A673 (cell line): ENCODE measurements at regions of chr19 and their contacts with region 1.

Region 1: DNA sequence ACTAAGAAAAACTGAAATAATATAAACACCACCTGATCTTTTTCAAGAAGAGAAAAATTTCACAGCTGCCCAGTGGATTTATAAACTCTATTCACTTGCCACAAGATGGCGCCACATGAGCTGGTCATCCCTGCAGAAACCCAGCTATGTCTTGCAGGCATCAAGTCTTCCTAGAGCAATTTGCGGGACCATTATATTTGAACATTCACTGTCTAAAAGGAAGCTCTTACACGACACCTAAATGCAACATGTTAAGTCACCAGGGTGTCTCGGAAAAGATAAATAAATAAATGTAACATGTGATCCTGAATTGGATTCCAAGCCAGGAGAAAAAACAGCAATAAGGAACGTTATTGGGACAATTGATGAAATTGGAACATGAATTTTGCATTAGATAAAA is 20.3 kb upstream of the AKT2 start:
- DNase-seq: peak; percentile 93
- H3K4me3 ChIP-seq: no peak overlapping the region
- H3K27ac ChIP-seq: peak overlapping the region; percentile 86
- H3K4me1 ChIP-seq: peaks cover 35% of the 10 kb centered on the region
- H3K27me3 ChIP-seq: no peaks in the 10 kb centered on the region
- CTCF ChIP-seq: peak; percentile 84

Region 2: DNA sequence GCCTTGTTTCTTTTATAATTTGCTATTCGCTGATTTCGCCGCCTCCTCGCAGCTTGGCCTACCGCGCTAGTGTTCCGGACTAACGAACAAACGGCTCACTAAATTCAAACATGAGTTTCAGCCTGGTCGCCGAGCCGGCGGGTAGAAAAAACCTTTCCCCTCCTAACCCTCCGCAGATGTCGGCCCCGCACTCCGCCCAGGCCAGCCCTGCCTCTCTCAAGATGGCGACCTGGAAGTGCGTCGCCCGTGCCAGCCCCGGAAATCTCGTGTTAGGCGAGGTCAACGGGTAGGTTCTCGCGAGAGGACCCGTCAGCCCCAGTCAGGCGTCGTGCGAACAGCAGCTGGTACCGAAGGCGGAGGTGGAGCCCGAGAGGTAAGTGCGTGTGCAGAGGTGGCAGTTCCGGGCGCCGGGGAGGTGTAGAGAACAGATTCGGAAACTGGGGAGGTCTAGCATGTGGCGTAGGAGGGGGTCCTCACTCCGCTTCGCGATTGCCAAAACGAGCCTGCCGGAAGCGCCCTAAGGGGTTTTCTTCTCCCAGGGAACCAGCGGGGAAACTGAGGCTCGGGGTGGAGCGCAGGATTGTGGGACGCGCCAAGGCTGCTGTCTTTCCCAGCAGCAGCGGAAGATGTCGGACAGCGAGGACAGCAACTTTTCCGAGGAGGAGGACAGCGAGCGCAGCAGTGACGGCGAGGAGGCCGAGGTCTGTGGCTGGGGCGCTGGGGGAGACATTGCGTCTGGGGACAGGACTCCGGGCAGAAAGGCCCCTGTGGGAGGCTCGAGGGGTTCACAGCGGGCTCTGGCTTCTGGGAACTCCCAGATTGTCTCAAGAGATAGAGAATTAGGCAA is 859.9 kb before region 1 on chr19 and contains the start of gene SUPT5H:
- CTCF ChIA-PET with region 1: no interaction called
- POLR2A ChIA-PET with region 1: no interaction called
- intact Hi-C with region 1: no loop called
- DNase-seq: peak; percentile 98
- H3K4me3 ChIP-seq: peak within 1 kb of the TSS; percentile 98
- H3K27ac ChIP-seq: peak within 1 kb of the TSS; percentile 88
- H3K4me1 ChIP-seq: peaks cover 10% of the 10 kb centered on the region
- H3K27me3 ChIP-seq: no peaks in the 10 kb centered on the region
- CTCF ChIP-seq: no peak
- total RNA-seq, gene SUPT5H: 160 and 169 TPM in 2 replicates

Region 3: GRCh38 chr19:40348125-40348913 is 42.9 kb after region 1 on chr19 and contains the starts of genes C19orf47 and PLD3:
- CTCF ChIA-PET with region 1: interaction called, 15 read pairs
- POLR2A ChIA-PET with region 1: no interaction called
- intact Hi-C with region 1: no loop called
- DNase-seq: peak; percentile 100
- H3K4me3 ChIP-seq: peak within 1 kb of the TSS; percentile 86
- H3K27ac ChIP-seq: peak within 1 kb of the TSS; percentile 66
- H3K4me1 ChIP-seq: peaks cover 10% of the 10 kb centered on the region
- H3K27me3 ChIP-seq: no peaks in the 10 kb centered on the region
- CTCF ChIP-seq: no peak
- total RNA-seq, gene C19orf47: 26.5 and 30.8 TPM in 2 replicates
- total RNA-seq, gene PLD3: 310 and 334 TPM in 2 replicates

Region 4: DNA sequence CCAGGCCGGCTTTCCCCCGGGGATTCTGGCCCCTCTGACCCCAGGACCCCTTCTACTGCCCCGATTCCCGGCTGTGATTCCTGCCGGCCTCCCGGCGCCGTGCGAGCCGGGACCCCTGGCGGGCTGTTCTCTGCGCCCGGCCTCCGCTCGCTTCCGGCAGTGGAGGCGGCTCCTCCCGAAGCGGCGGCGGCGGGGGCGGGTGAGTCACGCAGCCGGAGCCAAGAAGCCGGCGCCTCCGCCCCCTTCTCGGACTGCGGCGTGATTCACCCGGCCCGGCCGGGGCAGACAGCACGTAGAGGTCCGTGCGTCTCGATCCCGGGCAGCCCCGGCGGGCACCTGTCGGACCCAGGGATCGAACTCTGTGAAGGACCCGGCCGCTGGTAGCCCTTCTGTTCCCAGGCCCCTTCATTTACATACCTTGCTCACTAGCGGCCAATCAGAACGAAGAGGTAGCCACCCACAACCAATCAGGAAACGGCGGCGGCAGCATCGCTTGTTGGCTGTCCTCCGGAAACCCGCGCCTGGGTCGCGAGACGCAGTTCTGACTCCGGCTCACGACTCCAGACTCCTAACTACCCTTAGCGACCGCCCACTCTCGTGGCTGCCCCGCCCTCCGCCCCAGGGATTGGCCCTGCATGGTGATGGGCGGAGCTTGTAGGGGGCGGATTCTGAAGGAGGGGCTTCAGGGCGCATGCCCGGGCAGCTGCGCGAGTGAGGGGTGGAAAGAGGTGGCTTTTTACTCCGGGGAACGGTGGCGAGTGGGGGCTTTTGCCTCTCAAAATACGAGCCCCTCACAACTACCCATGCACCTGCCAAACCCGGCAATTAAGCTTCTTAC is 120.3 kb after region 1 on chr19 and contains the start of gene SERTAD1:
- CTCF ChIA-PET with region 1: interaction called, 7 read pairs
- POLR2A ChIA-PET with region 1: no interaction called
- intact Hi-C with region 1: loop called (anchors 5 kb)
- DNase-seq: peak; percentile 100
- H3K4me3 ChIP-seq: peak within 1 kb of the TSS; percentile 68
- H3K27ac ChIP-seq: peak within 1 kb of the TSS; percentile 91
- H3K4me1 ChIP-seq: peaks cover 6% of the 10 kb centered on the region
- H3K27me3 ChIP-seq: no peaks in the 10 kb centered on the region
- CTCF ChIP-seq: peak; percentile 82
- total RNA-seq, gene SERTAD1: 9.6 and 16.5 TPM in 2 replicates

Region 5: DNA sequence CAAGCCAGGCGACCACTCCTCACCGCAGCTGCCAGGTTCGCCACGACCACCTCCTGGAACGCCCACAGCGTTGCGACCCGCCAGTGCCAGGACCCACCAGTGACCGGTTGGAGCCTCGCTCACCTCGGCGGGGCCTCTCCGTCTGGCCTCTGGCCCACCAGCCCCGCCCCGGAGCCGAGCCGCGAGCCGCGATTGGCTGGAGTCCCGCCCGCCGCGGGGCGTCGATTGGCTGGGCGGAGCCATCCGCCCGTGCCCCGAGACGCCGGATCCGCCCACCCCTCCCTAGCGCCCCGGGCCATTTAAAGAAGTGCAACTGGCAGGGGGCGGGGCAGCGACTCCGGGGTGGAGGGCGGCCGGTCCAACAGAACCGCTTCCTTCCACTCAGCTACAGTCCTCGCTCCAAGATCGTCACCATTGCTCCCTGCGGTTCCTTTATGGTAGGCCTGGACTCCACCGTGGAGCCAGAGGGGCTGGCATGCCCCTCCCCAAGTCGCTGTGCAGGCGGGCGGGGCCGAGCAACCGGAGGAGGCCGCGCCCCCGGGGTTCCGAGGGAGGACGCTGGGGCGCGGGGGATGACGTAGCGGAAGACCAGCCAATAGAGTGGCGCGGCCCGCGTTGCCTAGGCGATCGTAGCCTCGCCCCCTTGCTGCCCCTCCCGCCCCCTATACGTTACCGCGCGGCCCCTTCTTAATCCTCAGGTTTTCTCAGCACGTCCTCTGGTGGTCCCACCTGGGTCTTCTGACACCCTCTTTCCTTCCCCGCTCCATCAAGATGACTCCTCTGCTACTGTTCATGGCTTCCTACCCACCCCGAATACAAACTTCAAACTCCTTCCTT is 139.0 kb after region 1 on chr19 and contains the start of gene SERTAD3:
- CTCF ChIA-PET with region 1: interaction called, 7 read pairs
- POLR2A ChIA-PET with region 1: interaction called, 6 read pairs
- intact Hi-C with region 1: loop called (anchors 5 kb)
- DNase-seq: peak; percentile 98
- H3K4me3 ChIP-seq: peak within 1 kb of the TSS; percentile 82
- H3K27ac ChIP-seq: peak within 1 kb of the TSS; percentile 96
- H3K4me1 ChIP-seq: peaks cover 22% of the 10 kb centered on the region
- H3K27me3 ChIP-seq: no peaks in the 10 kb centered on the region
- CTCF ChIP-seq: peak; percentile 52
- total RNA-seq, gene SERTAD3: 26.3 and 28.7 TPM in 2 replicates

Region 6: DNA sequence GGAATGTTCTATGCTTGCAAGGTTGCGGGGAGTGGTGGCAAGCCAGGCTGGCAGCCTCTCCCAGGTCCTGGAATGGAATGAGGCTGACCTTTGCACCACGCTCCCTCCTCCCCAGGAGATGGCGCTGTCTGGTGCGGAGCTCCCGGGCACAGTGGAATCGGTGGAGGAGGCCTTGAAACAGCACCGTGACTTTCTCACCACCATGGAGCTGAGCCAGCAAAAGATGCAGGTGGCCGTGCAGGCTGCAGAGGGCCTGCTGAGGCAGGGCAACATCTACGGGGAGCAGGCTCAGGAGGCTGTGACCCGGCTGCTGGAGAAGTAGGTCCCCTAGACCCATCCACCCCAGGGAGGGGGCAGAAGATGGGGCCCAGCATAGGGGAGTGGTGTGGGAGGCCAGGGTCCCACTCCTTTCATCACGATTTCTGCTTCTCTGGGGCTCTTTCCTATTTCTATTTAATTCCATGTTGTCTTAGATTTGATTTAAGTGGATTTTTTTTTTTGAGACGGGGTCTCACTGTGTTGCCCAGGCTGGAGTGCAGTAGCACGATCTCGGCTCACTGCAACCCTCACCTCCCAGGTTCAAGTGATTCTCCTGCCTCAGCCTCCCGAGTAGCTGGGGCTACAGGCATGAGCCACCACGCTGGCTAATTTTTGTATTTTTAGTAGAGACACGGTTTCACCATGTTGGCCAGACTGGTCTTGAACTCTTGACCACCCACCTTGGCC is 218.1 kb after region 1 on chr19:
- CTCF ChIA-PET with region 1: interaction called, 11 read pairs
- POLR2A ChIA-PET with region 1: interaction called, 3 read pairs
- intact Hi-C with region 1: loop called (anchors 5 kb)
- DNase-seq: peak; percentile 83
- H3K4me3 ChIP-seq: no peak overlapping the region
- H3K27ac ChIP-seq: no peak overlapping the region
- H3K4me1 ChIP-seq: no peaks in the 10 kb centered on the region
- H3K27me3 ChIP-seq: peaks cover 14% of the 10 kb centered on the region
- CTCF ChIP-seq: peak; percentile 90

Region 7: DNA sequence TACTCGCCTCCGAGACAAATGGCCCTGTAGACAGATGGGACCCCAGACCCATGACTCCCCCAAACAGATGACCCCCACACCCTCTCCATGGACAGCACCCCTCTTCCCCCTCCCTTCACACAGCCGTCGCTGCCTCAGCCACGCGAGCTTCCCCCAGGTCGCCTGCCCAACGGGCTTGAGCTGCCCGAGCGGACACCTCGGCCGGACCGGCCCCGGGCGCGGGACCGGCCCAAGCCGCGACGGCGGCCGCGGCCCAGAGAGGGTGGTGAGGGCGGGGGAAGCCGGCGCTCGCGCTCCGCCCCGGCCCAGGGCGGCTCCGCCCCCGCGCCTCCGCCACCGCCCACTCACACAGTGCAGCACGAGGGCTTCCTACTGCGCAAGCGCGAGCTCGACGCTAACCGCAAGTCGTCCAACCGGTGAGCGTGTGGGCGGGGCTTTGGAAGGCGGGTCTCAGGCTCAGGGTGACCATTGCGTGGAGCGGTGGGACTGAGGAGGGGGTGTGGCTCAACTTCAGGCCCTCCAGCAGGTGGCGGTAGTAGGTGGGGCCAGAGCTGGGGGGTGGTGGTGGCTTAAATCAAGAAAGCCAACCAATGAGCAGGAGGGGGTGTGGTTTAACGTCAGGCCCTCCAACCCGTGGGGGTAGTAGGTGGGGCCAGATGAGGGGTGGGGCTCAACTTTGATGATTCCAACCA is 265.1 kb after region 1 on chr19:
- CTCF ChIA-PET with region 1: interaction called, 10 read pairs
- POLR2A ChIA-PET with region 1: no interaction called
- intact Hi-C with region 1: no loop called
- DNase-seq: peak; percentile 100
- H3K4me3 ChIP-seq: peak overlapping the region; percentile 47
- H3K27ac ChIP-seq: no peak overlapping the region
- H3K4me1 ChIP-seq: peaks cover 5% of the 10 kb centered on the region
- H3K27me3 ChIP-seq: peaks cover 25% of the 10 kb centered on the region
- CTCF ChIP-seq: peak; percentile 63

Region 8: GRCh38 chr19:40598121-40598917 is 292.9 kb after region 1 on chr19:
- CTCF ChIA-PET with region 1: interaction called, 6 read pairs
- POLR2A ChIA-PET with region 1: no interaction called
- intact Hi-C with region 1: loop called (anchors 2 kb)
- DNase-seq: peak; percentile 96
- H3K4me3 ChIP-seq: peak overlapping the region; percentile 61
- H3K27ac ChIP-seq: peak overlapping the region; percentile 95
- H3K4me1 ChIP-seq: peaks cover 36% of the 10 kb centered on the region
- H3K27me3 ChIP-seq: no peaks in the 10 kb centered on the region
- CTCF ChIP-seq: peak; percentile 99